ENCODE measurements at regions of chr12 and their contacts with region 1.

Region 1: DNA sequence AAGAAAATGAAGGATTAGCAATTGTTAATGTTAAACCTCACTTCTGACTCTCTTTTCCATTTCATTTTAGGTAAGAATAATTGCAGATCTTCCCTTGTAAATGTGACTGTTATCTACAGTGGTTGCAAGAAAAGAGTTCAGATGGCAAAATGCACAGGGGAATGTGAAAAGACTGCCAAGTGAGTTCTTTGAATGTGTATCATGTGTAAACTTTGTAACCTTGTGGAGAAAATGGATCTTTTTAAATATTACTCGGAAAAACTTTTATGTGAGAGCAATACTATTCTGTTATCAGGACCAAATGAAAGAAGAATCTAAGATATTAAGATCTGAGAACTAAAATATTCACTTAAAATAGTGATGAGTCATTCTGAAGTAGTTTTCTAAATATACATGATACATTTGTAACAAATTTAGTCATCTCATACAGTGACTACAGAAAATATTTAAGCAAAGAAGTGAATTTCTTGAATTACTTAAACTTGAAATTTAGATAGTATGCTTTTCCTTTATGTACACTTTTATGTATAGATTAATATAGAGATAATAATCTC is 122.5 kb upstream of the CNTN1 start:
- DNase-seq: no peak
- ATAC-seq: no peak
- H3K4me3 ChIP-seq: no peak overlapping the region
- H3K27ac ChIP-seq: no peak overlapping the region
- H3K4me1 ChIP-seq: no peaks in the 10 kb centered on the region
- H3K27me3 ChIP-seq: no peaks in the 10 kb centered on the region
- CTCF ChIP-seq: no peak
- POLR2A ChIP-seq: no peak
- RAD21 ChIP-seq: no peak

Region 2: DNA sequence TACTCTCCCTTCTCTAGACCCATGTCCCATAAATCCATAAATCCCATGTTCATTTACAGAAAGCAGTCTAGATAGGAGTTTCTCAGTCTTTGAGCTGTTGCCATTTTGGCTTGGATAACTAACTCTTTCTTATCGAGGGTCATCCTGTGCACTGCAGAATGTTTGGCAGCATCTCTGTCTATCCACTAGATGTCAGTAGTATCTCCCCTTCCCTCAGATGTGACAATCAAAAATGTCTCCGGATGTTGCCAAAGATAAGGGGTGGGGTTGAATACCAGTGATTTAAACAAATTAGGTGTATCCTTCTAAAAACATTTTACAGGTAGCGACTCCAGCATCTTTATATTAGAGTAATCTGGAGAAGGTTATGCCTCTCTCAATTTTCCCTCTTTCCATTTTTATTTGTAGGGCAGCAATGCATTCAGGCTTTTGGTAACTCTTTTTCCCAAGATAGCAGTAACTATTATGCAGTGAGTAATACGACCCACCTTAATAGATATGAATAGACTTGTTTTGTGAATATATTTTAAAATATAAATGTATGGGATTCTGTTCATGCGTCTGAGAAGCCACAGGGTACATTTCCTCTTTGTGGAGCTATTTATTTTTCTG is 244.2 kb before region 1 on chr12:
- CTCF ChIA-PET with region 1: no interaction called
- POLR2A ChIA-PET with region 1: no interaction called
- RAD21 ChIA-PET with region 1: no interaction called
- intact Hi-C with region 1: loop called (anchors 5 kb)
- DNase-seq: peak; percentile 59
- ATAC-seq: peak; percentile 95
- H3K4me3 ChIP-seq: 0 out of 4 replicates have a peak overlapping the region, but pooled peaks of 1 of the 2 experiments have one; percentile 44
- H3K27ac ChIP-seq: no peak overlapping the region
- H3K4me1 ChIP-seq: peaks cover 2 to 9% of the 10 kb centered on the region in 2 experiments; a peak in 3 of 4 replicates
- H3K27me3 ChIP-seq: no peaks in the 10 kb centered on the region
- CTCF ChIP-seq: peak; percentile 37 to 89 (median 76); a peak in 5 of 6 replicates
- POLR2A ChIP-seq: no peak
- RAD21 ChIP-seq: peak; percentile 65

Region 3: DNA sequence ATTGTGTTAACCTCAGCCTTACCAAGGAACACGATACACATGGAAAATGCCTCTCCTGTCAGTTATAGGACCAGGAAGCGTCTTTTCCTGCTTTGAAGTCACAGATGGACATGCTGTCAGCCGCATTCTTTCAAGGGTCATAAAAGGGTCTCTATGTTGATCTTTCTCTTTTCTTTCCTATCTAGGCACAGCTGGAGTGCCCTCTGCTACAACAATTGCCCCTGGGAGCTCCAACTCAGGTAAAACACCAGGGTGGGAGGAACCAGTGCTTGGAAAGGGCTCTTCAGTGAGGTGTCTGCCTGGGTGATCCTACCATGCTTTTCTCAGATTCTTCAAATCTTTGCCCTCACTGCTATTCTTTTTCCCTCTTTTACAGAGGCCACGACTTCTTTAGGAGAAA is 34.9 kb before region 1 on chr12:
- CTCF ChIA-PET with region 1: no interaction called
- POLR2A ChIA-PET with region 1: no interaction called
- RAD21 ChIA-PET with region 1: no interaction called
- intact Hi-C with region 1: no loop called
- DNase-seq: no peak
- ATAC-seq: no peak
- H3K4me3 ChIP-seq: no peak overlapping the region
- H3K27ac ChIP-seq: no peak overlapping the region
- H3K4me1 ChIP-seq: no peaks in the 10 kb centered on the region
- H3K27me3 ChIP-seq: no peaks in the 10 kb centered on the region
- CTCF ChIP-seq: no peak
- POLR2A ChIP-seq: no peak
- RAD21 ChIP-seq: no peak

Region 4: DNA sequence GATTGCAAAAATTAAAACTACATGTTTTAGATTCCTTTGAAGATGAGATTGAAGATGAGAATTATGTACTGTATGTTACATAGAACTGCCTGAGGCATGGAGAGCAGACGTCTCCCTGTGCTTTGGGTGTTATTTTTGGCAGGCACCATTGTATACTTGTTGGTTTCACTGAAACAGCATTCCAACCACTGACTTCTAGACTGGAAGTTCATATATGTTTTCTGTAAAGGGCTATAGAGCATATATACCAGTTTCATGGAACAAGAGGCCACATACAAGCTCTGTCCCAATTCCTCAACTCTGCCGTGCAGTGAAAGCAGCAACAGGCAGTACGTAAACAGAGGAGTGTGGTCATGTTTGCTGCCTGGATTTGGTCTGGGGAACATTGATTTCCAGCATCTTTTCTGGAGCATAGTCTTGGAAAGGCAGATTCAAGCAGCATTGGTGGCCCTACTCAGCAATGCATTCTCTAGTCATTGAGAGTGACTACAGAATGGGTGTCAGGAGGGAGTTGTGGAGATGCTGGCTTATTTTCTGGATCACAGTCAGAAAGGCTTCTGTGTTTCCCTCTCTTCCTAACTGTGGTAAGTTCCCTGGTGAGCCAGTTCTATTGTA is 64.9 kb after region 1 on chr12:
- CTCF ChIA-PET with region 1: no interaction called
- POLR2A ChIA-PET with region 1: no interaction called
- RAD21 ChIA-PET with region 1: no interaction called
- intact Hi-C with region 1: no loop called
- DNase-seq: no peak
- ATAC-seq: no peak
- H3K4me3 ChIP-seq: no peak overlapping the region
- H3K27ac ChIP-seq: no peak overlapping the region
- H3K4me1 ChIP-seq: no peaks in the 10 kb centered on the region
- H3K27me3 ChIP-seq: no peaks in the 10 kb centered on the region
- CTCF ChIP-seq: no peak
- POLR2A ChIP-seq: no peak
- RAD21 ChIP-seq: no peak

Measured in HCT116 (cell line).